ENCODE measurements at regions of chr3 and their contacts with region 1.

Region 1: DNA sequence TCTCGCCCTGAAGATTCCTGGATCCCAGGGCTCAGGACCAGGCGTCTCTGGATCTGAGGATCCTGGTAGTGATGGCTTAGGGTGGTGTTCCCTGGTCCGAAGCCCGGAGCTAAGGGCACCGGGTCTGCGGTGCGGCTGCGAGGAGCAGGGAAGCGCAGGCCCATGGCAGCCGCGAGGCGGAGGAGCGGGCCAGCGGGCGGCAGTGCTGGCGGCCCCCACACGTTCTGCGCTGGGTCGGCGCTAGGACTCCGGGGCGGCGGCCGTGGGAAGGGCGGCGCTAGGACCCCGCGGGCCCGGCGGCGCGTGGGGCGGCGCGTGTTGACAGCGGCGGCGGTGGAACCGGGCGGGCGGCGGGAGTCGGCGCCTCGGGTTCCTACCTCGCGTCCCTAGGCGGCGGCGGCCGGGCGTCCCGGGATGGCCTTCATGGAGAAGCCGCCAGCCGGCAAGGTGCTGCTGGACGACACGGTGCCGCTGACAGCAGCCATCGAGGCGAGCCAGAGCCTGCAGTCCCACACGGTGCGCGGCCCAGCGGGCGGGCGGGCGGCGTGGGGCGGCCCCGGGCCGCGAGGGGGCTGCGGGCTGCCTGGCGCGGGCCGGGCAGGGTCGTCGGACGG is at the start of gene PXK:
- H3K4me3 Mint-ChIP-seq: peak within 1 kb of the TSS; percentile 95
- H3K27ac Mint-ChIP-seq: peak within 1 kb of the TSS; percentile 91
- H3K4me1 Mint-ChIP-seq: peaks cover 39% of the 10 kb centered on the region
- H3K27me3 Mint-ChIP-seq: no peaks in the 10 kb centered on the region

Region 2: GRCh38 chr3:58349792-58350626 is 17.3 kb after region 1 on chr3:
- intact Hi-C with region 1: loop called (anchors 2 kb)
- H3K4me3 Mint-ChIP-seq: no peak overlapping the region
- H3K27ac Mint-ChIP-seq: peak overlapping the region; percentile 90
- H3K4me1 Mint-ChIP-seq: peaks cover 77% of the 10 kb centered on the region
- H3K27me3 Mint-ChIP-seq: no peaks in the 10 kb centered on the region

Region 3: DNA sequence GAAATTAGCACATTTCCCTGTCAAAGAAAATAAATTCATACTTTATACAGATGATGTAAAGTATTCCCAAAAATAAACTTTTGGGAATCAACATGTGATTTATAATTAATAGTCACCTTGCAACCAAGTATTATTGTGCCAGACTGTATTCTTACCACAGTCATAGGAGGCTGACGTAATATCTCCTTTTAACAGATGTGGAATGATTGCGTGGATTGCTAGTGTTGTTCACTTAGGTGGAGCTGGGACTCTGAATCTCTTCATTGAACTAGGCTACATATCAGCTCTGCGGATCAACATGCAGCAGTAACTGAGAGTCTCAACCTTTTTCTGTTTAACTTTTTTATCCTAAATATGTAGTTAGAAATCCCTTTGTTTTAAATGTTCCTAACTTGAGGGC is 37.2 kb after region 1 on chr3:
- intact Hi-C with region 1: loop called (anchors 5 kb)
- H3K4me3 Mint-ChIP-seq: no peak overlapping the region
- H3K27ac Mint-ChIP-seq: no peak overlapping the region
- H3K4me1 Mint-ChIP-seq: peaks cover 36% of the 10 kb centered on the region
- H3K27me3 Mint-ChIP-seq: no peaks in the 10 kb centered on the region

Region 4: DNA sequence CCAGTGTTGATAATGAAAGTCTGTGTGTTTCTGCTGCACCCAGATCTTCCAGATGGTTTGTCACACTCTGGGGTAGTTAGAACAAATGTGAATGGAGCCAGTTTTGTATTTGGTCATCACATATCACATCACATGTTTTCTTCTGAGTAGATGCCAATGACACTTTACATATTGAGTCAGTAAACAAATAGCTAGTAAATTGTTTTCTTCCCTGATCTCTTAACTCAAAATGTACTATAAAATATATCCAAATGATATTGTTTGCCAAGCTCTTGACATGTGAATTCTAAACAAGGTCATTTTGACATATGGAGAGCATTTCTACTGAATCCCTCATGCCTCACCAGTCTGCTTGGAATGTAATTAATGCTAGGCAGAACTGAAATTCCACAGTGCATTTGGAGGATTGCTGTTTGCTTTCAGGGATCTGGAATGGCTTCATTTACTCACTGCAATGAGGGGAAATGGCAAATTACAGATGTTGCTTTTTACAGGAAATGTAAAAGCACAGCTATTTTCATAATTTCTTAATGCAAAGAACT is 55.9 kb after region 1 on chr3:
- intact Hi-C with region 1: no loop called
- H3K4me3 Mint-ChIP-seq: no peak overlapping the region
- H3K27ac Mint-ChIP-seq: peak overlapping the region; percentile 63
- H3K4me1 Mint-ChIP-seq: peaks cover 25% of the 10 kb centered on the region
- H3K27me3 Mint-ChIP-seq: no peaks in the 10 kb centered on the region